Astrocyte of the cerebellum (primary cell): ENCODE measurements at regions of chr9 and their contacts with region 1.

Region 1: GRCh38 chr9:71929791-71930440 is 18.5 kb downstream of the C9orf85 start:
- DNase-seq: no peak
- H3K4me3 ChIP-seq: no peak overlapping the region
- CTCF ChIP-seq: no peak

Region 2: DNA sequence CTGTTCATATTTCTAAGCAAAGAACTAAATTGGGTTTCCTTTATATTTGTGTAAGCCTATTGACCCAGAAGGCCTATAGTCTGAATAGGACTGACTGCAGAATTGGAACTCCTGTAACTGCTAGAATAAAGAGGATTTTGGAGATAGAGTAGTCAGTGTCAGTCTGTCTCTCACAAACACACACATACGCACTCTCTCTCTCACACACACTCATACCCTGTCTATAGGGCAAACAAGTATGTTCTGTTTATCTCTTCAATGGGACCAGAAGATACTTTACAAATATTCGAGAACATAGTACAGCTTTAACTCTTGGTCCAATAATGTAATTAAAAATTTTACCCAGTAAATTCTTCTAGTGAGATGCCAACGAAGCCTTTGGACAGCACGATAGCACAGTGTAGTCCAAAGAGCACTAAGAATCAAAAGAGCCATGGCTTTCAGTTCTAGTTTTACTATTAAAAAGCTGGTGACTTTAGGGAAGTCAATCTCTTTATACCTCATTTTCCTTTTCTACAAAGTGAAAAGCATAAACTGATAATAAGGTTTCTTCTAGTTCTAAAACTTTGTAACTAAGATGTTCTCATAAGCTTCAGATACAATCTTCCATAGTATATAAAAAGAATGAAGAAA is 38.2 kb before region 1 on chr9:
- in situ Hi-C with region 1: loop called (anchors 5 kb)
- DNase-seq: no peak
- H3K4me3 ChIP-seq: no peak overlapping the region
- CTCF ChIP-seq: no peak

Region 3: GRCh38 chr9:72022841-72023240 is 92.9 kb after region 1 on chr9:
- in situ Hi-C with region 1: no loop called
- DNase-seq: peak; percentile 8
- H3K4me3 ChIP-seq: no peak overlapping the region
- CTCF ChIP-seq: no peak